ENCODE measurements at regions of chr3 and their contacts with region 1.

Region 1: DNA sequence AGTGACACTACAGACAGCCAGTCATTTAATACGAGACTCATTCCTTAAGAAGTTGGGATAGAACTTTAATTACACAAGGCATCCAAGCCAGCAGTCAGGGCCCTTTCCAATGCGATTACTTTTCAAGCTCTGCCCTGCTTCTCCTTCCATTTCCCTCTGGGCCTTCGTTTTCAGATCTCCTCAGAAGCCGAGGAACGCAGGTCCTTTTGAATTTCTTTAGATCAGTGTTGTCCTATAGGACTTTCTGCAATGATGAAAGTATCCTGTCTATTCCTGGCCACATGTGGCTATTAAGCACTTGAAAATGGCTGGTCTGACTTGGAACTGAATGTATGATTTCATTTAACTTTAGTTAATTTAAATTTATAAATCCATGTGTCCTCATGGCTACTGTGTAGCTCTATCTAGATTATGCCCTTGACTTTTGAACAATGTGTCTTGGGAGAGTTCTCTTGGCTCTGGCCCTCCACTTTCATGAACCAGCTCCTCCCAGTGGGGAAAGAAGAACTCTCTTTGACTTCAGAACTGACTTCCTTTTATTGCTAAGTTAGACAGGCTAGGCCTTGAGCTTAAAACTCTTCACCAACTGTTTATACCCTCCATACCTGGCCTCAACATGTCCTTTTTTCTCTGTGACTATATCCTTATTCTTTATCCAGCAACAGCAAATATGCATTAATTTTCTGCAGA is 22.6 kb downstream of the TGFBR2 start:
- DNase-seq: no peak
- H3K4me3 Mint-ChIP-seq: peak overlapping the region; percentile 19
- H3K27ac Mint-ChIP-seq: peak overlapping the region; percentile 77
- H3K4me1 Mint-ChIP-seq: peaks cover 63% of the 10 kb centered on the region
- H3K27me3 Mint-ChIP-seq: no peaks in the 10 kb centered on the region
- CTCF ChIP-seq: peak; percentile 9

Region 2: DNA sequence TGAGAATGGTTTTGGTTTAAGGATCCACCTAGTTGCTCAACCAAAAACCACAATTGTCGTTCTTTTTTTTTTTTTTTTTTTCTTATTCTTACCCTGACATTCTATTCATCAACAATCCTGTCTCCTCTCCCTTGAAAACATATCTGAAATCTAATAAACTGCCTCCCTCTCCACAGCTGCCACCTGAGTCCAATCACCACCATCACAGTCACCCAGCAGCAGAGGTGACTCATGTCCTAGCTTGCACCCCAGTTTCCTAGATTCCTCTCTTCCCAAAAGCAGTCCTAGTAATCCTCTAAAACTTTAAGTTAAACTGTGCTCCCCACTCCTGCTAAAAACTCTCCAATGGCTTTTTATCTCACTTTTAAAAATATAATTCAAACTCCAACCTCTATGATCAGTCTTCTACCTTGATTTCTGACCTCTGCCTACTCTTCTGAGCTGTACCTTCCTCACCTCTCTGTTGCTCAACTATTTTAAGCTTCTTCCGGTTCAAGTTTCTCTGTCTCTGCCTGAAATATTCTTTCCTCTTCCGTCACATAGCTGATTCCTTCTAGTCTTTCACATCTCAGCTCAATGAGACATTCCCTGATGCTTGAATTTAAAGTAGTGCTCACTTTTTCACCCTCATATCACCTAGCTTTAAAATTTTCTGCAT is 1381.8 kb before region 1 on chr3:
- CTCF ChIA-PET with region 1: no interaction called
- POLR2A ChIA-PET with region 1: no interaction called
- intact Hi-C with region 1: no loop called
- DNase-seq: peak; percentile 16
- H3K4me3 Mint-ChIP-seq: no peak overlapping the region
- H3K27ac Mint-ChIP-seq: peak overlapping the region; percentile 64
- H3K4me1 Mint-ChIP-seq: peaks cover 17% of the 10 kb centered on the region
- H3K27me3 Mint-ChIP-seq: no peaks in the 10 kb centered on the region
- CTCF ChIP-seq: no peak

Region 3: DNA sequence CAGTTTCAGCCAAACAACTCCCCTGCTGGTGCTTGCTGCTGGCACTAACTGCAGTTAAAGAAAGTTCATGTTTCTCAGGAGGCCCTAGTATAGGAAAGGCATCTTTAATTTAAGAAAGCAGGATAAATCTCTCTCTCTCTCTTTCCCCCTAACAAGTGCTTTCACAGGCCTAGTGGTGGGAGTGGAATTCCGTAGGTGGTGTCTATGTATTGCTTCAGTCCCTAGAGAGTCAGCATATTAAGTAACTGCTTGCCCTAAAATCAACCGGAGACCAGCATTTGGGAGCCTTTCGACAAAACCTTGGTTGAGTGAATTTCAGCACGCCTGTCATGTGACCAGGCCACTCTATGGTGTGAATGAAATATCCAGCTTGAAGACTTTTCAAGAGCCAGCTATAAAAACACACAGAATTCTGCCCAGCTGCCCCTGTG is 191.9 kb before region 1 on chr3:
- CTCF ChIA-PET with region 1: no interaction called
- POLR2A ChIA-PET with region 1: no interaction called
- intact Hi-C with region 1: no loop called
- DNase-seq: peak; percentile 71
- H3K4me3 Mint-ChIP-seq: no peak overlapping the region
- H3K27ac Mint-ChIP-seq: no peak overlapping the region
- H3K4me1 Mint-ChIP-seq: peaks cover 13% of the 10 kb centered on the region
- H3K27me3 Mint-ChIP-seq: no peaks in the 10 kb centered on the region
- CTCF ChIP-seq: no peak

Region 4: GRCh38 chr3:30553641-30554316 is 75.3 kb before region 1 on chr3:
- CTCF ChIA-PET with region 1: no interaction called
- POLR2A ChIA-PET with region 1: no interaction called
- intact Hi-C with region 1: no loop called
- DNase-seq: peak; percentile 23
- H3K4me3 Mint-ChIP-seq: no peak overlapping the region
- H3K27ac Mint-ChIP-seq: no peak overlapping the region
- H3K4me1 Mint-ChIP-seq: peaks cover 19% of the 10 kb centered on the region
- H3K27me3 Mint-ChIP-seq: no peaks in the 10 kb centered on the region
- CTCF ChIP-seq: no peak

Region 5: DNA sequence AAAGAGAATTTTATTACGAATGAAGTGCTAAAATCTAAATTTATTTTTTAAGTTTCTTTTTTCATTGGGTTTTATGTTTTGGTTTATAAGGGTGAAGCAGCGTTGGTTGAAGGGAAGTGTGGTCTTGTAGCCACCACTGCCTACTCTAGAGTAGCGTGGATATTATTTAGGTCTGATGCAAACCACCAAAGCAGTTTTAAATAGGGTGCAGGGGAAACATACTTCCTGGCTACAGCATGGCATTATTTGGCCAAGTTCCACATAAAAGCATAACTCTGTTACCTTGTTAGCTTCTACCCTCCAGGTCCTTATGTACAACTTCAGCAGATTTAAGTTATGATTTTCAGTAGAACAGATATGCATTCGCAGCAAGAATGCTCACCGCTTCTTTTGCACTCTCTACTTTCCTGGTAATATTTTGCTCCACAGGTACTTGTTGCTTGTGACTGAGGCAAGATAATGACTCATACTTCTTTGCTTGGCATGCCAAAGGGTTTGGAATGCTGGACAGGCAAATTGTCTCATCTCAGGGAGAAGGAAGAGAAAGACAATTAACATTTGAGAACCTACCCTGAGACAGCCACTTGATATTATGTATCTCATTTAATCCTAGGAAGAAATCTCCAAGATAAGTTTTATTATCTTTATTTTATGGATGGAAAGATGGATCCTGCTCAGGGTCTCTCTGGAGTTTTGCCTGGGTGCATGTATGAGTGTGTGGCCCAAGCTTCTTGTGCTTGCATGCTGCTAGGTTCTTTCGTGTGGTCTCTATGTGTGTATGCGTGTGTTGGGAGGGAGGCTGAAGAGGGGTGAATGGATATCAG is 17.2 kb before region 1 on chr3:
- CTCF ChIA-PET with region 1: interaction called, 4 read pairs
- POLR2A ChIA-PET with region 1: interaction called, 190 read pairs
- intact Hi-C with region 1: loop called (anchors 2 kb)
- DNase-seq: peak; percentile 84
- H3K4me3 Mint-ChIP-seq: peak overlapping the region; percentile 86
- H3K27ac Mint-ChIP-seq: peak overlapping the region; percentile 93
- H3K4me1 Mint-ChIP-seq: peaks cover 68% of the 10 kb centered on the region
- H3K27me3 Mint-ChIP-seq: no peaks in the 10 kb centered on the region
- CTCF ChIP-seq: no peak